Dendritic cell treated with granulocyte-macrophage colony-stimulating factor and Interleukin-4, amounts not matched to agents 40 ng/mL and 50 ng/mL, for 4 days (primary cell): ENCODE measurements at regions of chr14 and their contacts with region 1.

Region 1: DNA sequence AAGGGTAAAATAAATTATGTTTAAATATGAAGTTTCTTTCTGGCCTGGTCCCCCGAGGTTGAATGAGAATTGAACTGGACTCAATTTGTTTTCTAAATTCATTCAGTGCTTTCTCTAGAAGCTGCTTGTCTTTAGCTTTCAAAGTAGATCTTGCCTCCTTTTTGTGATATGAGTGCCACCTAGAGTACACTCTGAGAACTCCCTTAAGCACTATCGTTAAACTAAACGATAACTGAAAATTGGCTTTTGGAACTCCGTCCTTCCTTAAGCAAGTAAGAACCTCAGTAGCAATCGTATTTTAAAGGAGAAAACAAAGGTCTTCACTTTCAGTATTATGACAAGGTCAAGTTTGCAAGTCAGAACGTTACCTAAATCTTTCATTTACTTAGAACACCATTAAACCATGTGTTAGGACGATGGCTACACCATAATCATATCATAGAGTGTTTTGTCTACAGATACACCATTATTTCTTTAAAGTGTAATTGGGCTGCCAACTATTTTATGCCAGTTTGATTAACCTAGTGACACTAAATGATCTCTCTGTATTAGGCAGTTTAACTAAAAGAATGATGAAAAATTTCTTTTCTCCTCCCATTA is 364.8 kb downstream of the SNAPC1 start:
- H3K4me3 Mint-ChIP-seq: no peak overlapping the region
- H3K27ac Mint-ChIP-seq: no peak overlapping the region
- H3K4me1 Mint-ChIP-seq: no peaks in the 10 kb centered on the region
- H3K27me3 Mint-ChIP-seq: peaks cover 14% of the 10 kb centered on the region

Region 2: GRCh38 chr14:61296719-61297502 is 830.1 kb before region 1 on chr14:
- intact Hi-C with region 1: loop called (anchors 10 kb)
- H3K4me3 Mint-ChIP-seq: no peak overlapping the region
- H3K27ac Mint-ChIP-seq: no peak overlapping the region
- H3K4me1 Mint-ChIP-seq: no peaks in the 10 kb centered on the region
- H3K27me3 Mint-ChIP-seq: no peaks in the 10 kb centered on the region

Region 3: DNA sequence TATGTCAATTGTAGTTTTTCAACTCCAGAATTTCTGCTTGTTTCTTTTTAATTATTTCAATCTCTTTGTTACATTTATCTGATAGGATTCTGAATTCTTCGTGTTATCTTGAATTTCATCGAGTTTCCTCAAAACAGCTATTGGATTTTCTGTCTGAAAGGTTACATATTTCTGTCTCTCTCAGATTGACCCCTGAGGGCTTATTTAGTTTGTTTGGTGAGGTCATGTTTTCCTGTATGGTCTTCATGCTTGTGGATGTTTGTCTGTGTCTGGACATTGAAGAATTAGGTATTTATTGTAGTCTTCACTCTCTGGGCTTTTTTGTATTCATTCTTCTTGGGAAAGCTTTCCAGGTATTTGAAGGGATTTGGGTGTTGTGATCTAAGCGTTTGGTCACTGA is 279.1 kb before region 1 on chr14:
- intact Hi-C with region 1: no loop called
- H3K4me3 Mint-ChIP-seq: no peak overlapping the region
- H3K27ac Mint-ChIP-seq: no peak overlapping the region
- H3K4me1 Mint-ChIP-seq: no peaks in the 10 kb centered on the region
- H3K27me3 Mint-ChIP-seq: peaks cover 5% of the 10 kb centered on the region

Region 4: DNA sequence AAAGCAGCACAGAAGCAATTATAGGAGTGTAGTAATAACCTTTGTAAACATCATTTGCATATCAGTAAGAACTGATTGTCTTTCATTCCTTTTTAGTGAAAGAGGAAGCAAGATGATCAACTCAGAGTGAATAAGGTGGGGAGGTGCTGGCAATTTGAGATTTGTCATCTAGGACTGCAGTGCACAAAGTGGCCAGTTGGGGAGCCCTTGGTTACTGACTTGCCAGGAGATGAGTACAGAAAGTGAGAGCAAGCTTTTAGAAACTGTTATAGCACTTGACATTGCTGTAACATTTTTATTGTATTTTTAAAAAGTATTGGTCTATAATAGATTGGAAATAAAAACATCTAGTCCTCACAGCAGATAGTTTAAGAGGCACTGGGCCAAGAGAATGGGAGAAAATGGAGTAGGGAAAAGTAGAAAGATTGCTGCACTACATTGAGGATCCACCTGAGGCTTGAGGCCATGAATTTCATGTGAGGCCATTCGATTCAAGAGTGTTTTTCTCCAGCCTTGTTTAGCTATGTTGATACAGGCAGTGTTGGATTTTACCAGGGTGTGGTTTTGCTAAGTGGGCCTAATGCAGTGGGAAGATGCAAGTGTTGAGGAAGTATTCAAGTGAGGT is 266.6 kb before region 1 on chr14:
- intact Hi-C with region 1: loop called (anchors 10 kb)
- H3K4me3 Mint-ChIP-seq: no peak overlapping the region
- H3K27ac Mint-ChIP-seq: no peak overlapping the region
- H3K4me1 Mint-ChIP-seq: no peaks in the 10 kb centered on the region
- H3K27me3 Mint-ChIP-seq: peaks cover 23% of the 10 kb centered on the region

Region 5: GRCh38 chr14:61894452-61895077 is 232.4 kb before region 1 on chr14:
- intact Hi-C with region 1: loop called (anchors 10 kb)
- H3K4me3 Mint-ChIP-seq: no peak overlapping the region
- H3K27ac Mint-ChIP-seq: no peak overlapping the region
- H3K4me1 Mint-ChIP-seq: peaks cover 27% of the 10 kb centered on the region
- H3K27me3 Mint-ChIP-seq: peaks cover 24% of the 10 kb centered on the region

Region 6: DNA sequence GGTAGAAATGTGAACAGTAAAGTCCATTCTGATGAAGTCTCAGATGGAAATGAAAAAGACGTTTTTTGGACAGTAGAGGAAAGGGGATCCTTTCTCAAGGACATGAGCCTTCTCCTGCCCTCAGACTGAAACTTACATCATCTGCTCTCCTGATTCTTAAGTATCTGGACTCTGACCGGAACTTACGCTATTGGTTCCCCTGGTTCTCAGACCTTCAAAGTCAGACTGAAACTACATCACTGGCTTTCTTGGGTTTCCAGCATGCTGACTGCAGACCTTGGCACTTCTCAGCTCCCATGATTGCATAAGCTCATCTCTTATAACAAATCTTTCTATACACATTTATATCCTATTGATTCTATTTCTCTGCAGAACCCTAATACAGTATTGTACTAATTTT is 73.8 kb before region 1 on chr14:
- intact Hi-C with region 1: no loop called
- H3K4me3 Mint-ChIP-seq: no peak overlapping the region
- H3K27ac Mint-ChIP-seq: no peak overlapping the region
- H3K4me1 Mint-ChIP-seq: no peaks in the 10 kb centered on the region
- H3K27me3 Mint-ChIP-seq: no peaks in the 10 kb centered on the region